ENCODE measurements at regions of chr18 and their contacts with region 1.

Region 1: GRCh38 chr18:65057439-65058083 is 693.3 kb upstream of the CDH7 start:
- DNase-seq: no peak
- ATAC-seq: peak; percentile 42

Region 2: DNA sequence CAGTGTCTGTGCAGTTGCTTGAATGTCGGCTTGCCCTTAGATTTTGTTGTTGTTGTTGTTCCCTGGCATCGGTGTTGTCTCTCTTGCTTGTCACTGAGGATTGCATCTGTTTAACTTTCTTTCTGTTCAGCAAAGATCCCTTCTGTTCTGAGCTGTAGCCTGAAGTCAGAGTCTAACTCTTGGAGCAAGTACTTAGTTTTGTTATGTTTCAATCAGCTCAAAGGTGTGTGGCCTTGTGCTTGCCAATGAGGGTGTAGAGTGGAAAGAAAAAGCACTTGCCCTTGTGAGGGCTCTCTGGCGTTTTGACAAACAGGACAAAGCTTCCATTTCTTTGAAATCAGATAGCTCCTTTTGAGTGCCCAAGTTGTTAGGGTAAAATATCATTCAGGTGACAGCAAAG is 63.9 kb before region 1 on chr18:
- intact Hi-C with region 1: loop called (anchors 5 kb)
- DNase-seq: no peak
- ATAC-seq: peak; percentile 41

Measured in Right ventricle myocardium inferior (tissue), 1 donor.